AG04450 (cell line): ENCODE measurements at regions of chr2 and their contacts with region 1.

Region 1: DNA sequence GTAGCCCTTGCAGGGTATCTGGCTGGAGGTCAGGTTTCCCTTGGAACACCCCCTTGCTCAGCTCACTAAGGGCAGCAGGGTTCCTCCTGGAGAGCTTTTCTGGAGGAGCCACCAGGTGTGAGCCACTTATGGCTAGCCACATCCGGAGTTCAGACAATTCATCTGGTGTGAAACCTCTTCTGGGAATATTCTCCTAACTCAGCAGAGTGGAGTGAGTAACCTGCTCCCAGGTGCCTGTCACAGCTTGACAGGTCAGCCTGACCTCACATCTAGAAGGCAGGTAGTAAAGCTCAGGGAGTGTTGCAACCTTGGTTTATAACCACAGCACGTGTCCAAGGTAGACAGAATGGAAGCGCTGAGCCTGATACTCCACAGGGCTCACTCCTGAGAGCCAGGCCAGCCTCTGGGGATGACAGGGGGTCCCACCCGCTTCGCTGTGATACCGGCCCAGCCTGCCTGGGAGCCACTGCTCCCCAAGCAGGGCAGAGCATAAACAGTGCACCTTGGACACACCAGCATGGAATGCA is 62.6 kb upstream of the TGFA start:
- DNase-seq: no peak
- H3K4me3 ChIP-seq: no peak overlapping the region
- H3K27ac ChIP-seq: no peak overlapping the region
- H3K27me3 ChIP-seq: peaks cover 2% of the 10 kb centered on the region
- CTCF ChIP-seq: no peak

Region 2: GRCh38 chr2:70340921-70341765 is 275.1 kb before region 1 on chr2:
- CTCF ChIA-PET with region 1: interaction called, 41 read pairs
- POLR2A ChIA-PET with region 1: no interaction called
- DNase-seq: no peak
- H3K4me3 ChIP-seq: no peak overlapping the region
- H3K27ac ChIP-seq: no peak overlapping the region
- H3K27me3 ChIP-seq: peaks cover 9% of the 10 kb centered on the region
- CTCF ChIP-seq: peak; percentile 74

Region 3: DNA sequence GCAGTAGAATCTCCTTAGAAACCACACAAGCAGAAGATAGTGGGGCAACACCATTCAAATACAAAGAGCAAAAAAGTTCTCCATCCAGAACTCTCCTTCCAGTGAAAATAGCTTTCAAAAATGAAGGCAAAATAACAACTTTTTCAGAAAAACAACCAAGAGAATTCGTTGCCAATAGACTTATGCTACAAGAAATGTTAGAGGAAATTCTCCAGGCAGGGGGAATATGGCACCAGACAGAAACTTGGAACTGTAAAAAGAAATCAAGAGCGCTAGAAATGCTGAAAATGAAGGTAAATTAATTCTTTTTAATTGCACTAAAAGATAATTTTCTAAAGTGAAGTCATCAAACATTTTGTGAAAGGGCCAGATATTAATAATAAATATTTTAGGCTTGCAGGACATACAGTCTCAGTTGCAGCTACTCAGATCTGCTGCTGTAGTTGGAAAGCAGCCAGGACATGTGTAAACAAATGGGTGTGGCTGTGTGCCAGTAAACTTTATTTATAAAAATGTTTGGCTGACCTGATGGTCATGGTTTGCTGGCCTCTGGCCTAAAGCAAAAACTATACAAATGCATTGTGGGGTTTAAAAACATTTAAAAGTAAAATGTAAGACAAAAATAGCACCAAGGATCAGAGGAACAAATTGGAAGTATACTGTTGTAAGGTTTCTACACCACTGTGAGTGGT is 11.1 kb after region 1 on chr2:
- CTCF ChIA-PET with region 1: interaction called, 20 read pairs
- POLR2A ChIA-PET with region 1: no interaction called
- DNase-seq: no peak
- H3K4me3 ChIP-seq: no peak overlapping the region
- H3K27ac ChIP-seq: no peak overlapping the region
- H3K27me3 ChIP-seq: peaks cover 6% of the 10 kb centered on the region
- CTCF ChIP-seq: no peak